Body of pancreas (tissue), 4 donors: ENCODE measurements at regions of chr3 and their contacts with region 1.

Region 1: GRCh38 chr3:47849699-47850563 is 47.0 kb downstream of the DHX30 start:
- DNase-seq: peak in 1 of 4 donors; percentile 36
- ATAC-seq: no peak
- H3K4me3 ChIP-seq: no peak overlapping the region
- H3K27ac ChIP-seq: no peak overlapping the region
- H3K4me1 ChIP-seq: no peaks in the 10 kb centered on the region
- H3K27me3 ChIP-seq: no peaks in the 10 kb centered on the region
- CTCF ChIP-seq: peak in 6 of 7 experiments; percentile 12 to 45 (median 24)
- POLR2A ChIP-seq: no peak

Region 2: GRCh38 chr3:47989981-47990440 is 140.1 kb after region 1 on chr3:
- intact Hi-C with region 1: loop called (anchors 10 kb)
- DNase-seq: peak; percentile 81 to 92 (median 90)
- ATAC-seq: peak; percentile 98
- H3K4me3 ChIP-seq: no peak overlapping the region
- H3K27ac ChIP-seq: peak overlapping the region in 1 of 4 donors; percentile 32
- H3K4me1 ChIP-seq: peaks cover 14% of the 10 kb centered on the region
- H3K27me3 ChIP-seq: no peaks in the 10 kb centered on the region
- CTCF ChIP-seq: peak; percentile 84 to 97 (median 94)
- POLR2A ChIP-seq: no peak

Region 3: DNA sequence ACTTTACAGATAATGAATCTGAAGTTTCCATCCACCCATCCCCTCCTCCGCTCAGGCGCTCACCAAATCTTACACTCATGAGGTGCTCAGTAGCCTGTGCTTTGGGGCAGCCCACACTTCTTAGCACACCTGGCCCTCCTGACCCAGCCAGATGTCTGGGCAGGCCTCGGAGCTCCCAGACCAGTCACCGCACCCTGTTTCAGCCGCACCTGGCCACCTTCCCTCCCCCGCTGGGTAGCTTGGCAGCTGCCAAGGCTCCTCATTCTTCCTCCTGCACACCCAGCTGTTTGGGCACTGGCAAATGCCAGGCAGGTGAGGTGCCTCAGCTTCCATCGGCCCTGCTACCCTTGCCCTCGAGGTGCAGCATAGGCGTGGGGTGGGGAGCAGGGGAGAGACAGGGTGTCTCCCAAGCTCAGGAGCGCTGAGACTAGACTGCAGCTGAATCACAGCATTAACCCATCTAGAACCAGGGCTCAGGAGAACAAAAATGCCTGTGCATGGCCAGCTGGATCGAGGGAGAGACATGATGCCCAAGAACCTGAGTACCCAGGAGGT is 292.5 kb after region 1 on chr3:
- intact Hi-C with region 1: loop called (anchors 10 kb)
- DNase-seq: peak in 3 of 4 donors; percentile 48 to 71 (median 57)
- ATAC-seq: peak; percentile 33
- H3K4me3 ChIP-seq: no peak overlapping the region
- H3K27ac ChIP-seq: no peak overlapping the region
- H3K4me1 ChIP-seq: peaks cover 5% of the 10 kb centered on the region
- H3K27me3 ChIP-seq: no peaks in the 10 kb centered on the region
- CTCF ChIP-seq: no peak
- POLR2A ChIP-seq: no peak